ENCODE measurements at regions of chr14 and their contacts with region 1.

Region 1: GRCh38 chr14:106564058-106564656 is 1037.8 kb downstream of the TMEM121 start:
- DNase-seq: peak; percentile 86
- ATAC-seq: peak; percentile 76
- H3K4me3 Mint-ChIP-seq: no peak overlapping the region
- H3K27ac Mint-ChIP-seq: no peak overlapping the region
- H3K4me1 Mint-ChIP-seq: no peaks in the 10 kb centered on the region
- H3K27me3 Mint-ChIP-seq: peaks cover 10% of the 10 kb centered on the region

Region 2: DNA sequence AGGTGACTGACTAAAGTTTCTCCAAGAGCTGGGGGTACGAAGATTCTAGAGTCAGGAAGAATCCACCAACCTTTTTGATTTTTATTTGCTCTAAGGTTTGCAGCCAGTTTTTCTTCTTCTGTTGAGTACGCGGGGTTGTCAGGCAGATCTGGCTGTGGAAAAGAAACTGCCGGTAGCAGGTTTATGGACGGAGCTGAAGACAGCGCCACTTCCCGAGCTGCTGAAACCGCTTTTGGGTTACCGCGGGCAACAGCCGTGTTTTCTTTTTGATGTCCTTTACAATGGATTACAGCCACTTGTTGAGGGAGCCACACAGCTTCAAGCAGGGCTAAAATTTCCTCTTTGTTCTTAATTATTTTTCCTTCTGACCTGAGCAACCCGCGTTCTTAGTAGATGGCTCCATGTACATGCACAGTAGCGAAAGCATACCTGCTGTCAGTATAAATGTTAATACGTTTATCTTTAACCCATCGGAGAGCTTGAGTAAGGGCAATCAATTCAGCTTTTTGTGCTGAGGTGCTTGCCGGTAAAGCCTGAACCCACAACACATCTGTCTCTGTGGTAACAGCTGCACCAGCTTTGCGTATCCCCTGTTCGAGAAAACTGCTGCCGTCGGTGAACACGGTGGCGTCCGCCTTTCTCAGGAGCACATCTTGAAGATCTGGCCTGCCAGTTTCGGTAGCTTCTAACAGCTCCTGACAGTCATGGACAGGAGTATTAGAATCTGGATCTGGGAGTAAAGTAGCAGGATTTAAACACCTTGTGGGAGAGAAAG is 363.4 kb before region 1 on chr14:
- CTCF ChIA-PET with region 1: no interaction called
- POLR2A ChIA-PET with region 1: no interaction called
- intact Hi-C with region 1: no loop called
- DNase-seq: peak; percentile 49
- ATAC-seq: peak; percentile 68
- H3K4me3 Mint-ChIP-seq: peak overlapping the region; percentile 60
- H3K27ac Mint-ChIP-seq: no peak overlapping the region
- H3K4me1 Mint-ChIP-seq: peaks cover 18% of the 10 kb centered on the region
- H3K27me3 Mint-ChIP-seq: peaks cover 33% of the 10 kb centered on the region

Region 3: GRCh38 chr14:106268013-106268727 is 296.0 kb before region 1 on chr14:
- CTCF ChIA-PET with region 1: no interaction called
- POLR2A ChIA-PET with region 1: no interaction called
- intact Hi-C with region 1: loop called (anchors 2 to 5 kb)
- DNase-seq: peak; percentile 94
- ATAC-seq: peak; percentile 95
- H3K4me3 Mint-ChIP-seq: no peak overlapping the region
- H3K27ac Mint-ChIP-seq: no peak overlapping the region
- H3K4me1 Mint-ChIP-seq: peaks cover 4% of the 10 kb centered on the region
- H3K27me3 Mint-ChIP-seq: no peaks in the 10 kb centered on the region

Region 4: GRCh38 chr14:106286697-106287290 is 277.4 kb before region 1 on chr14:
- CTCF ChIA-PET with region 1: no interaction called
- POLR2A ChIA-PET with region 1: no interaction called
- intact Hi-C with region 1: no loop called
- DNase-seq: peak; percentile 56
- ATAC-seq: peak; percentile 44
- H3K4me3 Mint-ChIP-seq: no peak overlapping the region
- H3K27ac Mint-ChIP-seq: no peak overlapping the region
- H3K4me1 Mint-ChIP-seq: no peaks in the 10 kb centered on the region
- H3K27me3 Mint-ChIP-seq: peaks cover 3% of the 10 kb centered on the region

Region 5: GRCh38 chr14:106518054-106518943 is 45.9 kb before region 1 on chr14:
- CTCF ChIA-PET with region 1: interaction called, 10 read pairs
- POLR2A ChIA-PET with region 1: no interaction called
- intact Hi-C with region 1: no loop called
- DNase-seq: peak; percentile 92
- ATAC-seq: peak; percentile 84
- H3K4me3 Mint-ChIP-seq: no peak overlapping the region
- H3K27ac Mint-ChIP-seq: no peak overlapping the region
- H3K4me1 Mint-ChIP-seq: peaks cover 13% of the 10 kb centered on the region
- H3K27me3 Mint-ChIP-seq: no peaks in the 10 kb centered on the region

Region 6: DNA sequence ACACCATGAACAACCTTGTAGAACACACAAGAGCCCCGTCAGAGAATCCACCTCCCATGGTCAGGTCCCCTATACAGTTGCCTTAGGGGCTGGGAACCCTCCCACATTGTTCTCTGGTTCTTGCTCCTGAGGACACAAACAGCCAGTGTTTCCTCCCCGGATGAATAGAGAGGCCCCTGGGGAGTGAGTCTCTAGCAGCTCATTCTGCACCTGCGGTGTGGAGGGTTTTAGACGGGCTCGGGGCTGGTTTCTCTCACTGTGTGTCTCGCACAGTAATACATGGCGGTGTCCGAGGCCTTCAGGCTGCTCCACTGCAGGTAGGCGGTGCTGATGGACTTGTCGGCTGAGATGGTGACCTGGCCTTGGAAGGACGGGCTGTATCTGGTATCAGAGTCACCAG is 14.3 kb after region 1 on chr14:
- CTCF ChIA-PET with region 1: interaction called, 15 read pairs
- POLR2A ChIA-PET with region 1: no interaction called
- intact Hi-C with region 1: no loop called
- DNase-seq: no peak
- ATAC-seq: no peak
- H3K4me3 Mint-ChIP-seq: no peak overlapping the region
- H3K27ac Mint-ChIP-seq: no peak overlapping the region
- H3K4me1 Mint-ChIP-seq: no peaks in the 10 kb centered on the region
- H3K27me3 Mint-ChIP-seq: peaks cover 6% of the 10 kb centered on the region

Region 7: DNA sequence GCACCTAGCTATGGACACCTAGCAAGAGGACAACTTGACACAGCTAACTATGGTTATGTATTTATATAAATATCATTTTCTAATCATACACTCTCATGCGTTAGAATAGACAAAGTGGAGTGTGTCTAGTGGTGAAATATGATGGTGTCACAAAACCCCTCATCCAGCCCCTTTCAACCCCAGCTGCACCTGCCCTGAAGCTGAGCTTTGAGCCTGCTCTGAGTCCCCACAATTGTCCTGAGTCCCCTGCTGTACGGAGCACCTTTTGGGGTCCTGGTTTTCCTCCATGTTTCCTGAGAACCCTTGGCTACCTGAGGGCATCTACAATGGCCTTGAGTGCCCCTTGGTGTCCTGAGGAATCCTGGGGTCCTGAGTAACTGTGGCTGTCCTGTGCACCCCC is 35.1 kb after region 1 on chr14:
- CTCF ChIA-PET with region 1: interaction called, 13 read pairs
- POLR2A ChIA-PET with region 1: no interaction called
- intact Hi-C with region 1: no loop called
- DNase-seq: no peak
- ATAC-seq: no peak
- H3K4me3 Mint-ChIP-seq: no peak overlapping the region
- H3K27ac Mint-ChIP-seq: no peak overlapping the region
- H3K4me1 Mint-ChIP-seq: no peaks in the 10 kb centered on the region
- H3K27me3 Mint-ChIP-seq: peaks cover 47% of the 10 kb centered on the region

Region 8: DNA sequence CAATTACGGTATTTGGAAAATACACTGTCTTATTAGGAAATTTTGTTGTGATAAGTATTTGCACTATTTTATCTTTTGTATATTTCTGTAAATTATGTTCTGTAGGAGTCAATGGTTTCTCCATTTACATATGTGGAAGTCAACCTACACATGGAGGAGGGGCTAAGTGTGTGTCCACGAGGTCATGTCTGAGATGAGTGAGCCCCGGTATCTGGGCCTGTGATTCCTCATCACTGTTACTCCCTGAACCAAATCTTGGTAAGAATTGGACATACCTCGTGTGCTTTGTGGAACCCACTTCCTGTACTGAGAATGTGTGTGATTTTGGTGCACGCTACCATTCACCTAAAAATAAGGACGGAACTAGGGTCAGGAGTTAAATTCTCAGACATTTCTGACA is 67.7 kb after region 1 on chr14:
- CTCF ChIA-PET with region 1: no interaction called
- POLR2A ChIA-PET with region 1: no interaction called
- intact Hi-C with region 1: no loop called
- DNase-seq: peak; percentile 21
- ATAC-seq: peak; percentile 71
- H3K4me3 Mint-ChIP-seq: no peak overlapping the region
- H3K27ac Mint-ChIP-seq: no peak overlapping the region
- H3K4me1 Mint-ChIP-seq: peaks cover 6% of the 10 kb centered on the region
- H3K27me3 Mint-ChIP-seq: peaks cover 8% of the 10 kb centered on the region